ENCODE measurements at regions of chr17 and their contacts with region 1.

Region 1: DNA sequence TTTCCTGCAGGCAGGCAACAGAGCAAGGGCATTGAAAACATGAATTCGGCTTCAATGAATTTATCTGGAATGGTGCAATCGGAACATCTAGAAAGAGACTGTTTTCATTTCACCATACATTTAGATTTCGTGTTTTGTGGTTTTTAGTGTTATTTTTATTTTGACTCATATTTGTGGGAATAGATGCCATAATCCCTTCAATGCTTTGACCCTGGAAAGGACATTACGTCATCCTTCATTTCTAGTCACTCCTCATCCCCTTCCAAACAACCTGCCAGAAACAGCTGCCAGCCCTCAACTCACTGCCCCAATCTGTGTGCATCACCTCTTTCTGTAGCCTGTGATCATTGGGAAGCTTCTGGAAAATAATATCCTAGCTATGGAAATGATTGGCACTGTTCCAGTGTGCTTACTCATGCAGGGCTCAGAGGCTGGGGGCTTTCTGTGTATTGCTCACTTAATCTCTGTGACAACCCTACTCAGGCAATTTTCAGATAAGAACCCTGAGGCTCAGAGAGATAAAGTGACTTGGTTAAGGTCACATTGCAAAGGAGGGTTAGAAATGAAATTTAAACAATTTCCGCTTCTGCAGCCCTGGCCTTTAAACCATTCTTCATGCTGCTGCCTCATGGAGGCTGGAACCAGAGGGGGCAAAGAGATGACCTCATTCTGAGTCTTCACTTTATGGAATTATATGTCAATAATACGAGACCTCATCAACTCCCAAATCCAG is 9.5 kb upstream of the KSR1 start:
- DNase-seq: no peak
- ATAC-seq: peak in 1 of 8 donors; percentile 27
- H3K4me3 ChIP-seq: no peak overlapping the region
- H3K27ac ChIP-seq: no peak overlapping the region
- H3K4me1 ChIP-seq: peaks cover 0 to 15% (median 0%) of the 10 kb centered on the region in 9 donors
- H3K27me3 ChIP-seq: no peaks in the 10 kb centered on the region
- CTCF ChIP-seq: no peak

Region 2: GRCh38 chr17:27236717-27237315 is 209.9 kb before region 1 on chr17:
- intact Hi-C with region 1: loop called in 6 of 10 experiments (anchors 10 kb)
- DNase-seq: peak in 1 of 2 donors; percentile 80
- ATAC-seq: peak in 7 of 8 donors; percentile 61 to 79 (median 77)
- H3K4me3 ChIP-seq: no peak overlapping the region
- H3K27ac ChIP-seq: no peak overlapping the region
- H3K4me1 ChIP-seq: peaks cover 0 to 54% (median 3%) of the 10 kb centered on the region in 9 donors
- H3K27me3 ChIP-seq: no peaks in the 10 kb centered on the region
- CTCF ChIP-seq: peak; percentile 84 to 97 (median 94)

Region 3: GRCh38 chr17:27367121-27367991 is 79.4 kb before region 1 on chr17:
- intact Hi-C with region 1: loop called in 1 of 10 experiments (anchors 10 kb)
- DNase-seq: no peak
- ATAC-seq: peak in 1 of 8 donors; percentile 65
- H3K4me3 ChIP-seq: no peak overlapping the region
- H3K27ac ChIP-seq: no peak overlapping the region
- H3K4me1 ChIP-seq: peaks cover 0 to 18% (median 0%) of the 10 kb centered on the region in 9 donors
- H3K27me3 ChIP-seq: no peaks in the 10 kb centered on the region
- CTCF ChIP-seq: no peak

Region 4: DNA sequence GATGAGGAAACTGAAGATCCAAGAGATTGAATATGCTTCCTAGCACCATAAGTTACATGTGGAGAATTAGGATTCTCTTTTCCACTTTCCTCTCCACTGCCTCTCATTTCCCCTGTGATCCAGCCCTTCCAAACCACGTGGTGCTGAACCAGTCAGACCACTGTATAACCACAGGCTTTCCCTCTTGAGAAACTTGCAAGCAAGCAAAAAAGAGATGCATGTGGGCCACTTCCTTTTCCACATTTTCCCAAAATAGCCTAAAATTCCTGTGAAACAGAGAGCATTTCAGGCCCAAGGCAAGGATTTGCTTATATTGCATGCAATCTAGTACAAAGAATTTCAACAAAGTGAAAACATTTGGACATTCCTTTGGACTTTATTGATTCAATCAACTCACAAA is 49.8 kb before region 1 on chr17:
- intact Hi-C with region 1: loop called in 1 of 10 experiments (anchors 10 kb)
- DNase-seq: no peak
- ATAC-seq: peak in 6 of 8 donors; percentile 44 to 61 (median 49)
- H3K4me3 ChIP-seq: no peak overlapping the region
- H3K27ac ChIP-seq: peak overlapping the region in 1 of 10 donors; percentile 1
- H3K4me1 ChIP-seq: peaks cover 0 to 24% (median 0%) of the 10 kb centered on the region in 9 donors
- H3K27me3 ChIP-seq: no peaks in the 10 kb centered on the region
- CTCF ChIP-seq: no peak